BJ (cell line): ENCODE measurements at regions of chr2 and their contacts with region 1.

Region 1: DNA sequence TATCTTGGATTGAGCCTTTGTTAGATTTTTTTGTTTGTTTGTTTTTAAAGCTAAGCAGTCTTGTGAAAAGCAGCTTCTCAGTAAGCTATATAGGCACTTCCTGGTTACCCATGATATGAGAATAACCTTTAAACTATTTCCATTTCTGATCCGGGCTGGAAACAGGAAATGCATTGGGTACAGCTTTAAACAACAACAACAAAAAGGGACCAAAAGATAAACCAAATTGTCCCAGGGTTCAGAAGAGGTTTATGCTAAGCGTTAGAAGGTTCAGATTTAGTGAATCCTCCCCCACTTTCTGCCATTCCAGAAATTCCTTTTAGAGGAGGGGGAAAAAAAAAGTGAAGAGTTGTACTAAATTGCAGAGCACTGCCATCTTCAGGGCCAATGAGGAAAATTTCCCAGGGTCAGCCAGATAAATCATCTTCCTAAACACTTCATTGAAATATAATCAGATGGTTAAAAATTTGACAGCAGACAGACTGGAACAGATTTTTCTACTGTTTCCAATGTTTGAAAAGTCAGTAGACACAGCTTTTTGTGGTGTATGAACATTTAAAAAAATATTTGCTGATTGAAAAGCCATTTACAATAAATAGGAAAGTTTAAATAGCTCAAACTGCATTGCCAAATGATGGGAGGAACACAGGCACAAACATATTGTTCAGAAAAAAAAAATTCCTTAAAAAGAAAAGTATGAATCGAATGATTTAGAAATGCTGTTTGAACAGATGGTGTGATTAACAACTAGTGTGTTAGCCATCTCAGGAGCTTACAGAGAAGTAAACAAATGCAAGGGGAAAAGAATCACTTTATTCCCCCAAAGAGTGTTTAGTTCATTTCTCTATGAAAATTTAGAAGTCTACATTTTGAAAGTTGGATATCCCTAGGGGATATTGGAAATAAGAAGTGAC is 189.9 kb upstream of the TANK start:
- DNase-seq: peak; percentile 59
- H3K4me3 ChIP-seq: no peak overlapping the region
- H3K27me3 ChIP-seq: no peaks in the 10 kb centered on the region
- CTCF ChIP-seq: peak; percentile 74

Region 2: DNA sequence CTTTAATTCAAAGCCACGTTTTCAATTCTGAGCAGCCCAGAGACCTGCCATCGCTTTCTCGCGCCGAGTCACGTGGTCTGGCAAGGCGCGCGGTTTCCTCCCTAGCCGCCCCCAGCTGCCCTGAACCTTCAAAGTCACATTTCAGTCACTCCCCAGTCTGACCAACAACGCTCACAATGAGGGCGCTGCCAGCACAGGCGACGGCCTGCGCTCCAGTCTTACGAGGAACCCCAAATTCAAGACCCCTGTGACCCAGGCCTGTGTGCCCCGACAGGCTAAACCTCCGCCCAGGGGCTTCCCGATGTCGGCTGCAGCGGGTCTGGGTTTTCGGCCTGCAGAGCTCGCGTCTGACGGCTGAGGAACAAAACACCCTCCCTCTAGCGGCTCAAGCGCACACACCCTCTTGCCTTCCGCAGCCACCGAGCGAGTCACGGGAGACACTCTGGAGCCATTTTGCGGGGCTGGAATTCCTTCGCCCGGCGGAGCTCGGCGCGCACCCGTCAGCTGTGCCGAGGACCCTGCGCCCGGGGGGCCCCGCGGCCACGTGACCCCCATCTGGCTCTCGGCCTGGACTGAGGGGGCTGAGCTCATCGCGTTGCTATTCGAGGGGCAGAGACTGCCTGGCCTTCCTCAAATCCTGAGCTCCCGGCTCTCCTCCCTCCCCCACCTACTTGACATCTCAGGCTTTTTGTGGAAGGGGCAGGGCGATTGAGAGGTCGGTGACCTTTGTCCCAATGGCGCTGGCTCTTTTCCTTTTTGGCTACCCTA is 700.3 kb before region 1 on chr2:
- CTCF ChIA-PET with region 1: no interaction called
- POLR2A ChIA-PET with region 1: interaction called, 12 read pairs
- DNase-seq: peak; percentile 74
- H3K4me3 ChIP-seq: peak overlapping the region; percentile 39
- H3K27me3 ChIP-seq: no peaks in the 10 kb centered on the region
- CTCF ChIP-seq: peak; percentile 78

Region 3: DNA sequence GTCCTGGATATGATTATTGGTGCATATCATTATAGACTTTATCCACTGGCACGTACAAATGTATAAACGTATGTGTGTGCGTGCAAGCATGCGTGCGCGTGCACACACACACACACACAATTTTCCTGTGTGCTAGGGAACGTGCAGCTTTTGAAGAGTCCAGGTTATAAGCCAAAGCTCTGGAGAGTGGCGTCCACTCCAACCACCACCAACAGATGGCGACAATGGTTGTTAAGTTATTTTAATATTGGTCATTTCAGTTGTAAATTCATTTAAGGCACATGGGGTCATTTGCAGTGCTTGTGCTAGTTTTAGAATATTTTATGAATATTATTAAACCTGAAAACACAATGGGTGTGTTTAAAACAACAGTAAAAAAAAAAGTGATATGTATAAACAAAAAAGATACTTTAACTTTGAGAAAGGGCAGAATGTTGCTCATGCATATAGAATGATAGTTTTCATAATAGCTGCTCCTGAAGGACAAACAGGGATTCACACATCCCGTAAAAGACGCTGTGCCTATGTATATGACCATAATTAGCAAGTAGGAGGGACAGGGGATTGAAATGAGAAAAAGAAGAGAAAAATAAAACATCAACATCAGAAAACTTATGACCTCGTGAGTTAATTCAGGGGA is 646.0 kb before region 1 on chr2:
- CTCF ChIA-PET with region 1: interaction called, 14 read pairs
- POLR2A ChIA-PET with region 1: no interaction called
- DNase-seq: no peak
- H3K4me3 ChIP-seq: no peak overlapping the region
- H3K27me3 ChIP-seq: no peaks in the 10 kb centered on the region
- CTCF ChIP-seq: peak; percentile 76

Region 4: DNA sequence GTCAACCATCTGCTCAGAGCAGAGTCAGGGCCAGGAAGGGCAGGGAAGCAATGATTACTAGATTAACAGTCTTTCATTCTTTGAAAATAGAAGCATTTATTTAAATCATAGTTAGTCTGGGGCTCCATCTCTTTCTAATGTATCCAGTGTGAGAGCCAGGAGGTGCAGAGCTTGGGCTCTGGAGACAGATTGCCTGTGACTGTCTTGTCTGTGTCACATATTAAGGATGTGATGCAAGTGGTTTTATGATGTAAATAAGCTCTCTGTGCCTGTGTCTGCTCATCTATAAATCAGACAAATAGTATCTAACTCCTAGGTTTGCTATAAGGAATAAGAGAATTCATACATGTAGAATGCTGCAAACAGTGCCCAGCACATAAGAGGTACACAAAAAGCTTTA is 85.0 kb after region 1 on chr2:
- CTCF ChIA-PET with region 1: no interaction called
- POLR2A ChIA-PET with region 1: no interaction called
- DNase-seq: no peak
- H3K4me3 ChIP-seq: no peak overlapping the region
- H3K27me3 ChIP-seq: peaks cover under 1% of the 10 kb centered on the region; the same call in 1 of the 2 replicates
- CTCF ChIP-seq: no peak